Keratinocyte (primary cell): ENCODE measurements at regions of chr3 and their contacts with region 1.

Region 1: DNA sequence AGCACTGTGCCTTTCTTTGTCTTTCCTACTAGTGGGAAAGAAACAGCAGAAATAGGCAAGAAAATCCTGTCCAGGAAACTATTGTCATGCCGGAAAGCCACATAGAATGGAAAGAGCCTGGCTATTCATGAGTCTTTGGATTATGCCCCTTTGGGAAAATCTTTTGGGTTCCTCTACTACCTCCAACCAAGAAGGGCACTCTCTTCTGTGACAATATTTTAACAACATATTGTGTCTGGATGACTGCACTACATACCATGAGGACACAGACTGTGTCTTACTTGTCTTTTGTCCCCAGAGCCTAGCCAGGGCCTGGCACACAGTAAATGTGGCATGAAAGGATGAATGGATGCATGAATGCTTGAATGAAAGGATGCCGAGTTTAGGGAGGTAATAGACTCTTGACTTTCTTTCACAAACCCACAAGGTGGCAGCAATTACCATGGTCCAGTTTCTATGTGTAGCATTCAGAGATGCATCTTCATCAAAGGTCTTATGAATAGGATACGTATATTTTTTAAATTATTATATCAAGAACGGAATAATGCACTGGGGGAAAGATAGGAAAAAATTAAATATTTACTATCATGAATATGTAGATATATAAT is 30.3 kb downstream of the ARL14 start:
- DNase-seq: peak; percentile 9
- H3K4me3 ChIP-seq: no peak overlapping the region
- H3K27ac ChIP-seq: no peak overlapping the region
- H3K4me1 ChIP-seq: no peaks in the 10 kb centered on the region
- H3K27me3 ChIP-seq: no peaks in the 10 kb centered on the region
- CTCF ChIP-seq: peak; percentile 38 to 52 (median 40)

Region 2: DNA sequence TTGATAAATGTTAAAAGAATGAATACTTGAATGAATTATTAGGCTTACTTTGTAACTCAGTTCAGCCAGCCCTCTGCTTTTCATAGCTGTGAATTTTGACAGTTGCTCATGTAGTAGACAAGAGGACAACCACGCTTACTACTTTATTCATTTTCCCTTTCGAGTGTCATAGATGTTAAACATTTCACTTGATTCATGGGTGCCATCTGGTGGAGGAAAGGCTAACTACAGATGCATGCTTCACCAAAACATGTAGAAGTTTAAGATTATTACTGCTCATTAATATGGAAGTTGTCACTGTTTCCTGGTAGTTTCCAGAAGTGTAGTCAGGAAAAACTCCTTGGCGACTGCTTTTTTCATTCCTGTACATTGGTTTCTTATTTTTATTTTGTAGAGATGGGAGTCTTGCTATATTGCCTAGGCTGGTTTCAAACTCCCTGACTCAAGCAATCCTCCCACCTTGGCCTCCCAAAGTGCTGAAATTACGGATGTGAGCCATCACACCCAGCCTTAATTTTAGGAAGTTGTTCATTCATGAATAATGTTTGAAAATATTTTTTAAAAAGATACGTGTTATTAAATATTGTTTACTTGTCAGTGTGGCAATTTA is 234.7 kb after region 1 on chr3:
- dilution Hi-C with region 1: loop called (anchors 25 kb)
- DNase-seq: peak; percentile 4
- H3K4me3 ChIP-seq: no peak overlapping the region
- H3K27ac ChIP-seq: no peak overlapping the region
- H3K4me1 ChIP-seq: no peaks in the 10 kb centered on the region
- H3K27me3 ChIP-seq: no peaks in the 10 kb centered on the region
- CTCF ChIP-seq: peak in 2 of 3 experiments; percentile 71 to 74